Ascending aorta (tissue), 2 donors: ENCODE measurements at regions of chr19 and their contacts with region 1.

Region 1: DNA sequence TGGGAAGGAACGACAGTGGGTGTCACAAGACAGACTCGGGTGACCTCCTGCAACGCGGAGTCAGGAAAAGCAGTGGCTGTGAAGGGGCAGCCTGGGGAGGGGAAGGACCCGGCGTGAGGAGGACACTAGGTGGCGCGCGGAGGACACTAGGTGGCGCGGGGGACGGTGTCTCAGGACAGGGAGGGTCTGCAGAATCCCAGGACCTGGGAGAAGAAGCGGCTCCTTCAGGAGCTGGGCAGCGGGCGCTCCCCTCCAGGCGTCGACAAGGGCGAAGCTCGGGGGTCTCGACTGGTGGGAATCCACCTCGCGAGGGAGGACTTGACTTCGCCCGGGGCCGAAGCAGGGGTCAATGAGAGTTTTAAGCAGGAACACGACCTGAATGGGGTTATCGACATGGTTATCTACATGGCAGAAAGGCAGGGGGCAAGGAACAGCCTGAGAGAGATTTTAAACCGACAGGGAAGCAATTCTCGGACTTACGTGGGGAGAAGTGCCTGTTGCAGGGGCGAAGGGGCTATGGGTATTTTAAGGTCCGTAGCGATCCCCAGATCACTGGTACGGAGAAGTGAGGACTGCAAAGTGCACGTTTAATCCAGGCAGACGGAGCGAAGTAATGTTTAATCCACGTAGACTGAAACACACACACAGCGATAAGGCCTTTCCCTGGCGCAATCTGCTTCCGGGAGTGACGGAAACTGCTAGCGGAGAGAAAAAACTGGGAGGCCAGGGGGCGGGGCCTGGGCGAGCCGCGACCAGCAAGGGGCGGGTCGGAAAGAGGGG is at the start of gene ZNF616:
- DNase-seq: peak; percentile 76 to 97
- H3K4me3 ChIP-seq: peak within 1 kb of the TSS; percentile 93 to 97
- H3K27ac ChIP-seq: peak within 1 kb of the TSS; percentile 93 to 96
- H3K4me1 ChIP-seq: peaks cover 0 to 6% of the 10 kb centered on the region in 2 donors
- H3K27me3 ChIP-seq: no peaks in the 10 kb centered on the region
- CTCF ChIP-seq: peak; percentile 75 to 88 (median 80)
- total RNA-seq, gene ZNF616: 1.2 TPM

Region 2: DNA sequence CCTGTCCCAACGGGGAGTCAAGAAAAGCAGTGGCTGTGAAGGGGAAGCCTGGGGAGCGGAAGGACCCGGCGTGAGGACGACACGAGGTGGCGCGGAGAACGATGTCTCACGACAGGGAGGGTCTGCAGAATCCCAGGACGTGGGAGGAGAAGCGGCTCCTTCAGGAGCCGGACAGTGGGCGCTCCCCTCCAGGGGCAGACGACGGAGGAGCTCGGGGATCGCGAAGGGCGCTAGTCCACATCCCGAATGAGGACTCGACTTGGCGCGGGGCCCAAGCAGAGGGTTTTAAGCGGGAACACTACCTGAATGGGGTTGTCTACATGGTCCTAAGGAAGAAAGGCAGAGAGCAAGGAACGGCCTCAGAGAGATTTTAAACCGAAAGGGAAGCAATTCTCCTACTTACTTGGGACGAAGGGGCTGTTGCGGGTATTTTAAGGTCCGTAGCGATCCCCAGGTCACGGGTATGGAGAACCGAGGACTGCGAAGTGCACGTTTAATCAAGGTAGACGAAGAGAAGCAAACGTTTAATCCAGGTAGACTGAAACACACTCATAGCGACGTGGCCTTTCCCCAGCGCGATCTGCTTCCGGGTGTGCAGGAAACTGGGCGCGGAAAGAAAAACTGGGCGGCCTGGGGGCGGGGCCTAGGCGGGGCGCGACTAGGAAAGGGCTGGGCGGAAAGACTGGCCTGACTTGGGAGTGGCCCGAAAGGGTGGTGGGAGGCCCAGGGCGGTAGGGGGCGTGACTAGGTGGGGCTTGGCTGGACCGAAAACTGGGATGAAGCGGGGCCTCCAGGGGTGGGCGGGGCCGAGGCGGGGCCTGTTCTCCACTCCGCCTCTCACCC is 44.0 kb before region 1 on chr19 and contains the start of gene ZNF841:
- intact Hi-C with region 1: loop called (anchors 1 kb)
- DNase-seq: peak; percentile 85 to 97
- H3K4me3 ChIP-seq: peak within 1 kb of the TSS; percentile 91 to 95
- H3K27ac ChIP-seq: peak within 1 kb of the TSS; percentile 75 to 87
- H3K4me1 ChIP-seq: no peaks in the 10 kb centered on the region
- H3K27me3 ChIP-seq: no peaks in the 10 kb centered on the region
- CTCF ChIP-seq: no peak
- total RNA-seq, gene ZNF841: 6.9 TPM

Region 3: GRCh38 chr19:52171321-52172169 is 32.1 kb after region 1 on chr19 and contains the start of gene ZNF836:
- intact Hi-C with region 1: loop called (anchors 1 kb)
- DNase-seq: peak; percentile 53 to 93
- H3K4me3 ChIP-seq: peak within 1 kb of the TSS; percentile 70 to 76
- H3K27ac ChIP-seq: peak within 1 kb of the TSS; percentile 84 to 91
- H3K4me1 ChIP-seq: peaks cover 0 to 6% of the 10 kb centered on the region in 2 donors
- H3K27me3 ChIP-seq: no peaks in the 10 kb centered on the region
- CTCF ChIP-seq: no peak
- total RNA-seq, gene ZNF836: 2.8 TPM

Region 4: DNA sequence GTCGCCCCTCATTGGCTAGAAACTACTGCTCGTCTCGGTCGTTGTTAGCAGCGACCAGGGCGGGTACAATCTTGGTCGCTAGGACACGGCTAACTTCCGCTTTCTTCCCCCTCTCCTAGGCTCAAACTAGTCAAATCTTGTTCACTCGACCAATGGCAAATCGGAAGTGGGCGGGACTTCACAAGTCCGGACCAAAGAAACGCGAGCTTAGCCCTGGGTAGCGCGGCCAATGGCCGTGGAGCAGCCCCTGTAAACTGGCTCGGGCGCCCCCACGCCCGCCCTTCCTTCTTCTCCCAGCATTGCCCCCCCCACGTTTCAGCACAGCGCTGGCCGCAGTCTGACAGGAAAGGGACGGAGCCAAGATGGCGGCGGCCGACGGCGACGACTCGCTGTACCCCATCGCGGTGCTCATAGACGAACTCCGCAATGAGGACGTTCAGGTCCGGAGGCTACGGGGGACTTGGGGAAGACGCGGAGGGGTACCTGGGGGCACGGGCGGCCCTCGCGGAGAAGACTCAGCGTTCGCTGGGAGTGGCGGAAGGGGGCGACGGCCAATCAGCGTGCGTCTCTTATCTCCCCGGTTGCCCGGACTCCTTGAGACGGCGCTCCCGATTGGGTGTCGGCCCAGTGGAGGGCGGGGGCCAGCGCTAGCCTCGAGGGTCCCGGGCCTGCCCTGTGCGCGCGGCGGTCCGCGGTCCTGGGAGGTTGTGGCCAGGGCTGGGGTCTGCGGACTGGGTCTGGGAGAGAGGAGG is 50.5 kb after region 1 on chr19 and contains the start of gene PPP2R1A:
- intact Hi-C with region 1: loop called (anchors 1 kb)
- DNase-seq: peak; percentile 42 to 100
- H3K4me3 ChIP-seq: peak within 1 kb of the TSS; percentile 58 to 91
- H3K27ac ChIP-seq: peak within 1 kb of the TSS; percentile 98
- H3K4me1 ChIP-seq: peaks cover 10 to 20% of the 10 kb centered on the region in 2 donors
- H3K27me3 ChIP-seq: no peaks in the 10 kb centered on the region
- CTCF ChIP-seq: no peak
- total RNA-seq, gene PPP2R1A: 215 TPM

Region 5: DNA sequence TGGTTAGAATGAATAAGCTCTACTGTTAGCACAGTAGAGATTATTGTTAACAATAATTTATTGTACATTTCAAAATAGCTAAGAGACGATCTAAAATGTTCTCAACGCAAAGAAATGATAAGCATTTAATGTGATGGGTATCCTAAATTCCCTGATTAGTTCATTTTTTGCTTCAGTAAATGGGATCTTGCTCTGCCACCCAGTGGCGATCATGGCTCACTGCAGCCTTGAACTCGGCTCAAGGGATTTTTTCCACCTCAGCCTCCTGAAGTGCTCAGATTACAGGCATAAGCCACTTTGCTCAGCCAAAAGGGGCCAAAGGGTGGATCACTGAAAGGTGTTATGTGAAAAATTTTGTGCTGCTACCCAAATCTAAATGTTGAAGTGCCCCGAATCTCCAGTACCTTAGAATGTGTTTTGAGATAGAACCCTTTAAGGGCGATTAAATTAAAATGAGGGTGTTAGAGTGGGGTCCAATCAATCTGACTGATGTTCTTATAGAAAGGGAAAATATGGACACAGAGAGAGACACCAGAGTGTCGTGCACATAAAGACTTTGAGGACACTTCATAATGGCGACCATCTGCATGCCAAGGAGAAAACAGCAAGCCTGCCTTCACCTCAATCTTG is 98.4 kb after region 1 on chr19:
- intact Hi-C with region 1: loop called (anchors 1 kb)
- DNase-seq: peak in 1 of 2 donors; percentile 77
- H3K4me3 ChIP-seq: no peak overlapping the region
- H3K27ac ChIP-seq: no peak overlapping the region
- H3K4me1 ChIP-seq: no peaks in the 10 kb centered on the region
- H3K27me3 ChIP-seq: no peaks in the 10 kb centered on the region
- CTCF ChIP-seq: peak; percentile 72 to 88 (median 86)

Region 6: GRCh38 chr19:52269338-52270261 is 130.2 kb after region 1 on chr19 and contains the start of gene ZNF766:
- intact Hi-C with region 1: loop called (anchors 1 kb)
- DNase-seq: peak; percentile 89 to 99
- H3K4me3 ChIP-seq: peak within 1 kb of the TSS; percentile 92 to 99
- H3K27ac ChIP-seq: peak within 1 kb of the TSS; percentile 98
- H3K4me1 ChIP-seq: peaks cover 5 to 14% of the 10 kb centered on the region in 2 donors
- H3K27me3 ChIP-seq: no peaks in the 10 kb centered on the region
- CTCF ChIP-seq: no peak
- total RNA-seq, gene ZNF766: 2.3 TPM

Region 7: DNA sequence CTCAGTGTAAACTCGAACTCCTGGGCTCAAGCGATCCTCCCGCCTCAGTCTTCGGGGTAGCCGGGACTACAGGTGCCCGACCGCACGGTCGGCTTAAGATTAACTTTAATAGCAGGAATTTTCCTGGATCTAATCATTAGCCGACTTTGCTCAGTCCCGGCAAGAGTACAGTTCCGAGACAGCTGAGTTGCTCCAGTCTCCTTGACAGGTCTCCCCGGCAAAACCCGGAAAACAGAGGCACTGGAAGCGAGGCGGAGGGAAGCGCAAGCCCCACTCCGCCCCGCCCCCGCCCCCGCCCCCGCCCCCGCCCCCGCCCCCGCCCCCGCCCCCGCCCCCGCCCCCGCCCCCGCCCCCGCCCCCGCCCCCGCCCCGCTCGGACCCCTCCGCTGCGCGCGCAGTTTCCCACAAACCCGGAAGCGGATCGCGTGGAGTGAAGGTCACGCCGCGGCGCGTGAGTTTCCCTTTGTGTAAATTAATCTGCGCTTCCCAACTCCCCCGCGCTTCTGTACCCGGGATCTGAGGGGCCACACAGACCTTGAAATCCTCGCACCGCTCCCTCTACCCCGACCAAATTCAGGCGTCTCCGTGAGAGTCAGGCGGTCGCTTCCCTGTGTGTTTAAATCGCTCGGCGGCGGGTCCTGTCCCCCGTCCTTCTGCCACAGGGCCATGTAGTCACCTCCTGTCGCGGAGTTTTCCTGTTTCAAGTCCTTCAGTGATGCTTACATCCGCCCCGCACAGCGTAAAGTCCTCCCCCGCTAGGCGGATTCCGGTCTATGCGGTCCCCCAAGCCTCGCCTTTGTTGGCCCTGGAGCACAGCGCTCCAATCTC is 157.5 kb after region 1 on chr19 and contains the start of gene ZNF480:
- intact Hi-C with region 1: loop called (anchors 2 kb)
- DNase-seq: peak; percentile 26 to 87
- H3K4me3 ChIP-seq: peak within 1 kb of the TSS; percentile 77 to 84
- H3K27ac ChIP-seq: peak within 1 kb of the TSS; percentile 91 to 94
- H3K4me1 ChIP-seq: peaks cover 0 to 4% of the 10 kb centered on the region in 2 donors
- H3K27me3 ChIP-seq: no peaks in the 10 kb centered on the region
- CTCF ChIP-seq: no peak
- total RNA-seq, gene ZNF480: 4.4 TPM